Activated CD4-positive, alpha-beta T cell treated with anti-CD3 and anti-CD28 coated beads, Interleukin-2, amount 10 ng/mL, durations not matched to agents 7 days and 5 days (primary cell): ENCODE measurements at regions of chr17 and their contacts with region 1.

Region 1: GRCh38 chr17:43483674-43484372 is at the start of gene DHX8:
- DNase-seq: peak; percentile 98
- H3K4me3 Mint-ChIP-seq: peak within 1 kb of the TSS; percentile 96
- H3K27ac Mint-ChIP-seq: peak within 1 kb of the TSS; percentile 97
- H3K4me1 Mint-ChIP-seq: peaks cover 27% of the 10 kb centered on the region
- H3K27me3 Mint-ChIP-seq: no peaks in the 10 kb centered on the region
- total RNA-seq, gene DHX8: 56.0 to 78.8 TPM

Region 2: DNA sequence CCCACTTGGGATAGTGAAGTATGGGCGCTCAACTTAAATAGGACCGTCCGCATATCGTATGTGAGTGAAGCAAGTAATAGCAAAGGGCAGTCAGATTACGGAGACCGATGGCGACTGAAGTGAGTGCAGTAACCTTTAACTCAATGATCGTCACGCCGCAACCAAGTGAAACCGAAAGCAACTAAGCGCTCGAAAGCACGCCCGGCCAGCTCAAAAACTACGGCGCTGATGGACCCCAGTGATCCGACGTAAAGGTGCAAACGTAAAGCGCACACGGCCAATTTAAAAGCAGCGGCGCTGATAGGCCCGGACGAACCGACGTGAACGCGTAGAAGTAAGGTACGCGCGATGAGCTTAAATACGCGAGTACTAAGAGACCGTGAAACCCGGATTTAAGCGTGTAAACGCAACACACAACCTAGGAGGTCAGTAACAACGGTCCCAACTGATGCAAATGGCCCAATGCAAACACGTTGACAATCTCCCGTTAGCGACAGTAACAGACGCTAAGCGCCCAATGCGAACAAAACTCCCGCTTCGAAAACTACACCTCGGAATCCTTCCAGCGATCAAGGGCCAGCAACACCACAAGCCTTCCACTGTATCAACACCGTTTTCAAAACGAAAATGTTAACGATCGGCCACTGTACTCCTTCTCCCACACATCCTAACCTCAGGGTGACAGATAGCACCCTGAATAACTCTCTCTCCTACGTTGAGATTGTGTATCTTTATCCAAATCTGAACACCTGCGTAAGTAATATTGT is 122.9 kb before region 1 on chr17:
- CTCF ChIA-PET with region 1: interaction called, 26 read pairs
- POLR2A ChIA-PET with region 1: interaction called, 7 read pairs
- DNase-seq: peak; percentile 87
- H3K4me3 Mint-ChIP-seq: peak overlapping the region; percentile 86
- H3K27ac Mint-ChIP-seq: peak overlapping the region; percentile 100
- H3K4me1 Mint-ChIP-seq: peaks cover 16% of the 10 kb centered on the region
- H3K27me3 Mint-ChIP-seq: no peaks in the 10 kb centered on the region

Region 3: DNA sequence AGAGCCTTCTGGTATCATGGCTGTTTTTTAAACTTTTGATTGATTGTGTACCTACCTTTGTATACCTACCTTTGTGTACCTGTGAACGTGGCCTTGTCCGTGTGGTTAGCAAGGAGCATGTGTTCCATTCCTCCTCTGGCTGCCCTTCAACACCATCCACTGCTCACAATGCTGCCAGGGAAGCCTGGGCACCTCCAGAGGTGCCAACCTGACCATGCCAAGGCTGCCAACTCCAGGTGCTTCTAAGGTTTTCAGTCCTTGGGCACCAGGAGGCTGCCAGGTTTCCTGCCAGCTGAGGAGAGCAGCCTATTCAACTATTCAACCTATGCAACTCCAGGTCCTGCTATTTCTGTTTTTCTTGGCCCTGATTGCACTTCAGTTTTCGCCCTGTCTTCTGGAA is 102.6 kb before region 1 on chr17:
- CTCF ChIA-PET with region 1: interaction called, 18 read pairs
- POLR2A ChIA-PET with region 1: no interaction called
- DNase-seq: no peak
- H3K4me3 Mint-ChIP-seq: no peak overlapping the region
- H3K27ac Mint-ChIP-seq: no peak overlapping the region
- H3K4me1 Mint-ChIP-seq: peaks cover 4% of the 10 kb centered on the region
- H3K27me3 Mint-ChIP-seq: no peaks in the 10 kb centered on the region

Region 4: GRCh38 chr17:43410557-43411368 is 73.1 kb before region 1 on chr17:
- CTCF ChIA-PET with region 1: interaction called, 11 read pairs
- POLR2A ChIA-PET with region 1: no interaction called
- DNase-seq: no peak
- H3K4me3 Mint-ChIP-seq: no peak overlapping the region
- H3K27ac Mint-ChIP-seq: no peak overlapping the region
- H3K4me1 Mint-ChIP-seq: no peaks in the 10 kb centered on the region
- H3K27me3 Mint-ChIP-seq: peaks cover 22% of the 10 kb centered on the region

Region 5: DNA sequence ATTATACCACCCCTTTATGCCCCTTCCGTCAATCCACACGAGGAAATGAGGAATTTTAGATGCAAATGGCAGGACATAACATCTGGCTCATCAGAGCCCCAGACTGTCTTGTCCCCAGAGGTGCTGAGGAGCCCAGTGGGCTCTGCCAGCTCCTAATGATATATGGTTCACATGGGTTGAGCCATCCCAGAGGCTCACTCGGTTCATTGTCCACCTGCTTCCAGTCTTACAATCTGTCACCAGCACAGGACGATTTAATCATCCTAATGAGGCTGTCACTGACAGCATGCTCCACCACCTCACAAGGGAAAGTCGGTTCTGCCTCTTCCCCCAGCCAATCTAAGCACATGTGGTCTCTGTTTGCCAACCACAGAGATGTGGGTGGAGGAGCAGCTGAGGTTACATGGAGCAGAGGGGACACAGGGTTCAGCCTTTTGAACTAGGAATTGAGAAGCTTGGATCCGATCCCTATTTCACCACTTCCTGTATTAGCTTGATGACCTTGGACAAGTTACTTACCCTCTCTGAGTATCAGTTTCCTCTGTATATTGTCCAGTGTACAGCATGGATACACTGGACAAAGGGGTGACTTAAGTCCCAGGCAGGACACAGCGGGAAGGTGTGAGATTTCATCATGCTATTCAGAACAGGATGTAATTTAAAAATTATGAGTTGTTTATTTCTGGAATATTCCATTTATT is 27.0 kb before region 1 on chr17:
- CTCF ChIA-PET with region 1: interaction called, 16 read pairs
- POLR2A ChIA-PET with region 1: no interaction called
- DNase-seq: no peak
- H3K4me3 Mint-ChIP-seq: no peak overlapping the region
- H3K27ac Mint-ChIP-seq: no peak overlapping the region
- H3K4me1 Mint-ChIP-seq: peaks cover 1% of the 10 kb centered on the region
- H3K27me3 Mint-ChIP-seq: peaks cover 4% of the 10 kb centered on the region

Region 6: DNA sequence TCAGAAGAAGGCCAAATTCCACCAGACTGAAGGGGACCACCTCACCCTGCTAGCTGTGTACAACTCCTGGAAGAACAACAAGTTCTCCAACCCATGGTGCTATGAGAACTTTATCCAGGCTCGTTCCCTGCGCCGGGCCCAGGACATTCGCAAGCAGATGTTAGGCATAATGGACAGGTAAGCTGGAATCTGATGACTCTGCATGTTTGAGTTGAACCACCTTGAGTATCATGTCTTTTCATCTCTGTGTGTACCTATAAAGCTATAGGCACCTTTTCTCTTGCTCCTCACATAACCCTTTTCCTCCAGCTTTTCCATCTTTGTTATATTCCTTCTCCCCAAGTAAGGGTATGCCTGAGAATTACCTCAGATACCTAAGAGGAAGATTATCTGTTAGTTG is 37.6 kb after region 1 on chr17:
- CTCF ChIA-PET with region 1: interaction called, 12 read pairs
- POLR2A ChIA-PET with region 1: no interaction called
- DNase-seq: no peak
- H3K4me3 Mint-ChIP-seq: no peak overlapping the region
- H3K27ac Mint-ChIP-seq: no peak overlapping the region
- H3K4me1 Mint-ChIP-seq: peaks cover 7% of the 10 kb centered on the region
- H3K27me3 Mint-ChIP-seq: no peaks in the 10 kb centered on the region